Activated T-helper 2 cell treated with anti-CD3 and anti-CD28 coated beads, Interferon-gamma antibody, Interleukin-2, Interleukin-4, amounts not matched to agents 10 μg/mL and 5 μg/mL and 100 μg/mL, durations not matched to agents 14 hours and 24 hours and 36 hours (primary cell): ENCODE measurements at regions of chr4 and their contacts with region 1.

Region 1: DNA sequence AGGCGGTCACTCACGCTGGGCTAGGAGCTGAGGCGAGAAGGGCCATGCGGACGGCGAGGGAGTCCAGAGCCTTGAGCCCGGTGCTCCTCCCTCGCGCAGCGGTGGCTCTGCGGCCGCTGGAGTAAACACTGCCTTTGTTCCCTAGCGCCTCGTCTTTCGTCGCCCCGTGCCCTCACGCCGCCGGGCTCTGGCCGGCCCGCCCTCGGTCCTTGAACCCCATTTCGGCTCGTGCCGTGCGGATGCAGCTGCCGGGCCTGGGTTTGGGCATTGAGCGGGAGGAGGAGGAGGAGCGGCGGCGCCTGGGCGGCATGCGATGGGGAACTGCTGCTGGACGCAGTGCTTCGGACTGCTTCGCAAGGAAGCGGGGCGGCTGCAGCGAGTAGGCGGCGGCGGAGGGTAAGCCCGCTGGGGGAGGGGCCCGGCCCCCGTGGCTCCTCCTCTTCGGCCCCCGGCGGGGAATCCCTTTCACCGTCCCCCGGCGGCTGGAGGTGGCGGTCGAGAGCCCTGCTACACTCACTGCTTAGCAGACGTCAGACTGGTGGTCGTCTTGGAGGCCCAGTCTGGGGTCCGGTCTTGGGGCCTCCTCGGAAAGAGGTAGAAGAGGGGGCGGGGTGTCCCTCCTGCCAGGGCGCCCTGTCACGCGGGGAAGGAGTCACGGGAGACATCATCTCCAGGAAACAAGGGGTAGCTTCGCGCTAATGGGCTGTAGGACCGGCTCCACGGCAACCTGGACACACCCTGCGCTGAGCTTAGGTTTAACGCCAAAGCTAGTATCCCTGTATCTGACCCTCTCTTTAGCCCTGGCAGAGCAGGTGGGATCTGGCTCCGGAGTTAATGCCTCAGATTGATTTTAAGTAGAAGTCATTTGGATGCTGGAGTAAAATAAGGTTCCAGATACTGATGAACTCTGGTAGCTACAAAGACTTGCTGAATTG is at the start of gene AP1AR:
- DNase-seq: peak; percentile 77
- H3K4me3 Mint-ChIP-seq: peak within 1 kb of the TSS; percentile 90
- H3K27ac Mint-ChIP-seq: peak within 1 kb of the TSS; percentile 94
- H3K4me1 Mint-ChIP-seq: peaks cover 32% of the 10 kb centered on the region
- H3K27me3 Mint-ChIP-seq: peaks cover 6% of the 10 kb centered on the region
- total RNA-seq, gene AP1AR: 19.3 and 21.7 TPM in 2 replicates

Region 2: DNA sequence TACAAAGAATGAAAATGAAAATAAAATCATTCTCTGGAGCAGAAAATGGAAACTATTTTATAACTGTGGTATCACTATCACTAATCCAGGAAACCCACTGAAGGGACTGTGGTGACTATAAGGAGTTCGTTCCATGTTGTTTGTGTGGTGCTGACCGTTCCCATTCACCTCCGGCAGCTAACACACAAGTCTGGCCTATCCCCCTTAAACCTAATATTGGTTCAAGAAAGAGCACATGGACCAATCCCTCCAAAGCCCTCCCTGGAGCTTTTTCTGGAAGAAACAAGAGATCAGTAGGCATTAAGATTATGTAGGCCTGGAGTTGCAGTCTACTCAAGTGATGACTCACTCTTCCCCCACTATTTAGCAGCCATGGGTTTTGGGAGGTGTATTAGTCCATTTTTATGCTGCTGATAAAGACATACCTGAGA is 112.7 kb before region 1 on chr4:
- intact Hi-C with region 1: loop called (anchors 5 kb)
- DNase-seq: peak; percentile 36
- H3K4me3 Mint-ChIP-seq: no peak overlapping the region
- H3K27ac Mint-ChIP-seq: peak overlapping the region; percentile 91
- H3K4me1 Mint-ChIP-seq: peaks cover 22% of the 10 kb centered on the region
- H3K27me3 Mint-ChIP-seq: peaks cover 14% of the 10 kb centered on the region

Region 3: DNA sequence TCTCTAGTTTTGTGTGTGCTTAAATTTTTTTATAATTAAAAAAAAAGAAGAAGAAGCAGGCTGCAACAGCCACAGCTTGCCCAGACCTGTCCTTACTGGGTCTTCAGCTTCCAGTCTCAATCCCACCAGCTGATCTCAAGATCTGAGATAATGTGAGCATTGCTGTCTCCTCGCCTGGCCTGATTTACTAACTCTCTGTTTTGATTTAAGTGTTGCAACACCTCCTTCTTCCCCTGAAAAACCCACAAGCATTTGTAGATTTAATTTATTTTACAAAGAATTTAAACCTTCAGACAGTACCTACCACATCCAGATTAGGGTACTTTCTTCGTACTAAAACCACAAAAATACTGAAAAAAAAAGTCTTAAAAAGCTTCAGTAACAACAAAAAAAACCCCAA is 48.8 kb before region 1 on chr4:
- intact Hi-C with region 1: loop called (anchors 5 kb)
- DNase-seq: no peak
- H3K4me3 Mint-ChIP-seq: no peak overlapping the region
- H3K27ac Mint-ChIP-seq: peak overlapping the region; percentile 35
- H3K4me1 Mint-ChIP-seq: peaks cover 34% of the 10 kb centered on the region
- H3K27me3 Mint-ChIP-seq: no peaks in the 10 kb centered on the region

Region 4: DNA sequence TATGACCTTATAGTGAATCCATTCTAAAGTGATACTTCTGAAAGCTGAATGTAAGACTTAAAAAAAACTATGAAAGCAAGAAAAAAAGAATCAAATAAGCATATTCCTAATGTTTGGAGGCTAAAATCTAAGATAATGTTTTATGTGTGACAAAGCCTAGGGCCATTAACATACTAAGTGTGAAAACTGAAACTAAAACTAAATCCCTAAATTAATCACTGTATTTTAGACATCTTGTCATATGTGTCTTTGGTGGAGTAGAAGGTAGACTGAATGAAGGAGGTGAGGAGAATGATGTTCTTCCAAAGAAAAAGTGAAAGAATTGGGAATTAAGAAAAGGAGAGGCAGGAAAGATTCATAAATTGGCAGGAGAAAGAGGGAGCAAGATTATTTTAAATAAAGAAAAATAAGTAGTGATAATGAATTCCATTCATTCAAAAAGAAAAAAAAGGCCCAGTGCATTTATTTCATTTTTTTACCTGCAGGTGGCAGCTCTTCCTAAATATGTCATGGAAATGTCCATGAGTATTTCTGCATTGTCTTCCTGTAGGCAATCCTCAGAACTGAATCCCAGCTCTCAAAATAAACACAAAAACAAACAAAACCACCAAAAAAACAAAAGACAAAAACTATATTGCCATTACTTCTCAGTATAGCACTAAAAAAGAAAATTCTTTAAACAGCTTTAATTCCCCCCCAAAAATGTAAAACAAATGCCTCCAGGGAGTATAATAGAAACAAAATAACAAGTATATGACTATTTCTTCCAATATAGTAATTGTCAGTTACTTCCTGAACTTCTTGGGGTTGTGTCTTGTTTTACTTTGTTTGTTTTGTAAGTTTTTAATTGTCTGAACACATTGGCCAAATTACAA is 17.4 kb before region 1 on chr4:
- intact Hi-C with region 1: loop called (anchors 2 kb)
- DNase-seq: no peak
- H3K4me3 Mint-ChIP-seq: no peak overlapping the region
- H3K27ac Mint-ChIP-seq: no peak overlapping the region
- H3K4me1 Mint-ChIP-seq: peaks cover 11% of the 10 kb centered on the region
- H3K27me3 Mint-ChIP-seq: peaks cover 2% of the 10 kb centered on the region

Region 5: DNA sequence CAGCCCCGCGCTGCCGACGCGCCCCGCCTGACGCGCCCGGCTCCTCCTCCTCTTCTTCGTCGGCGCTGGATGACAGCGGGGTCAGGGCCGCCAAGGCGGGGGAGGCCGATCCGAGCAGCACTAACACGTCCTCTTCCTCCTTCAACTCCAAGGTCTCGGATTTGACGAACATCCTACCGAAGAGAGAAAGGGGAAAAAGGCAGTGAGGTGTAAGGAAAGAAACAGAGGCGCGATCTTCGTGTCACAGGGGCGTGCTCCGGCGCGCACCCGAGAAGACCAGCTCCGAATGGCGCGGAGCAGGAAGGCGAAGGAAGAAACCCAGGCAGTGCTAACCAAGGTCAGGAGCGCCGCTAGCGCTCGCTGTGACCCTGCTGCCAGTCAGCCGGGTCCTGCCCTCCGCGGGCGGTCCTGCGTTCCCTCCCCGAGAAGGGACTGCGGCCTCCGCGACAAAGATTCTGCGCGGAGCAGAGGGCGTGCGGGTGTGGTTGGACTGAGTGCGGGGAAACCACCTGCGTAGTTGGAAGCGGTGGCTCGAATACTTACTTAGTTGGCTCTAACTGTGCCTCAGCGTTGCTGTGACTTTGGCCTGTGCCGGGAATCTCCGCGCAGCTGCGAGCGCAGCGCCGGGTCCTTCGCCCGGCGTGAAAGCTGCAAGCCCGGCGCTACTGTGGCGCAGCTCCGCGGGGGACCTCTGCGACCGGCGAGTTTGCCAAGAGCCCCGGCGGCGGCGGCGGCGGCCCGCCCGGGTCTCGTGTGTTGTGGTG is 283.4 kb after region 1 on chr4:
- intact Hi-C with region 1: loop called (anchors 5 kb)
- DNase-seq: peak; percentile 44
- H3K4me3 Mint-ChIP-seq: peak overlapping the region; percentile 88
- H3K27ac Mint-ChIP-seq: peak overlapping the region; percentile 56
- H3K4me1 Mint-ChIP-seq: peaks cover 46% of the 10 kb centered on the region
- H3K27me3 Mint-ChIP-seq: peaks cover 86% of the 10 kb centered on the region